Aorta (tissue), 5 donors: ENCODE measurements at regions of chr18 and their contacts with region 1.

Region 1: DNA sequence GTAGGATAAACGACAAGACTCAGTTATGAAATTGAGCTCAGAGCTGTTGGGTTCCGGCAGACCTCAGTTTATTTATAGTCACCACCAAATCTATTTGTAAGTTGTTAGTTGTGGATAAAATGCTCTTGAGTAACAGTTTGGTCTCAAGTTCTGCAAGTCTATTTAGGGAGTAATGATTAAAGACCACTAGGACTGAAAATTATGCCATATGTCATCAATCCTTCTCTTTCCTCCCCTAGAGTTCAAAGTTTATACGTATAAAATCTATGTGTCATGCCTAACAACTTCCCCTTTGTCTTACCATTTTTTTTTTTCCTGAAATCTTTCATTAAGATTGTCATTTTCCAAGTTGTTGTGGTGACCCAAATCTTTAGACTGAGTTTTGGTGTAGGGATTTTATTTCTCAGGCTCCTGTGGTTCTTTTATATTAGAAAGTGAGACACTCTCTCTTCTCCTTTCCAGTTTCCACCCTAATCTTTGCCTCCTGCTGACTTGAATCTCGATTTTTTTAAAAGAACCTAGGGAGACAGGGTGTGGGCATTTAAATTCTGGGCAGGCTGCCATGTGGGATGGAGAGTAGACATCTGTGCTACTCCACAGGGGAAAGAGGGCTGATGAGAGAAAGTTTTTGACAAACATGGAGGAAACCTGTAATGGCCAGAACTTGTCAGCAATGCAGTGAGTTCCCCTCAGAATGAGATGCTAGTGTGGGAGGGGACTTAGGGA is 51.0 kb downstream of the LAMA3 start:
- DNase-seq: no peak
- ATAC-seq: no peak
- H3K4me3 ChIP-seq: no peak overlapping the region
- H3K27ac ChIP-seq: no peak overlapping the region
- H3K4me1 ChIP-seq: no peaks in the 10 kb centered on the region
- H3K27me3 ChIP-seq: no peaks in the 10 kb centered on the region

Region 2: DNA sequence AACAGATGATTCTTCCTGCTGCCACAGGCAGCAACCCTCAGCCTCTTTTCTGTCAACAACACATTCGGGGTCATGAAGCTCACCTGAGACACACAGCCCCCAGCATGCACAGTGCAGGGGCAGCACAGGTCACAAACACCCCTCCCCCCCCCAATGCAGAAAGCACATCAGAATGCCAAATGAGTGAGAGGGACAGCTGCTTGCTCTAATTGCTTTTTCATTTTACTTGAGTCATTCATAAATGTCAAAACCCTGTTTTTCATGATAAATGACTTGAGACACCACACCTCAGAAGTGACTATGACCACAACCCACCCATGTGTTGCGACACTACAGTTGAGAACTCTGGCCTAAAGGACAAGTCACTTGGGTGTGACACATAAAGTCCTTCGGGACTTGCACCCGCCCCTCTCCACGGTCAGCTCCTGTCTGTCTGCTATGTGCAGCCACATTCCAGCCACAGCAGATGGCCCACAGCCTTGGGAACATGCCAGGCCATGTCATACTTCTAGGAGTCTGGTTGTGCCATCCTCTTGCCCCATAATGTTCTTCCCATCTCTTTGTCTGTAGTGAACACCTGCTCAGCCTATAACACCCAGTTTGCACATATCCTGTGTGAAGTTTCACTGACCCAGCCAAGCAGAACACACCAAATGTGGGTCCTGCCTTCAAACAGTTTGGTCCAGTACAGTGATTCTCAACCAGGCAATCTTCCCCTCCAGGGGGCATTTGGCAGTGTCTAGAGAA is 317.4 kb before region 1 on chr18:
- intact Hi-C with region 1: no loop called
- DNase-seq: no peak
- ATAC-seq: no peak
- H3K4me3 ChIP-seq: no peak overlapping the region
- H3K27ac ChIP-seq: no peak overlapping the region
- H3K4me1 ChIP-seq: no peaks in the 10 kb centered on the region
- H3K27me3 ChIP-seq: no peaks in the 10 kb centered on the region

Region 3: GRCh38 chr18:23689616-23690504 is 50.4 kb before region 1 on chr18:
- intact Hi-C with region 1: loop called in 1 of 2 experiments (anchors 5 kb)
- DNase-seq: peak; percentile 48 to 79
- ATAC-seq: peak; percentile 44
- H3K4me3 ChIP-seq: peak overlapping the region; percentile 27 to 70
- H3K27ac ChIP-seq: no peak overlapping the region
- H3K4me1 ChIP-seq: no peaks in the 10 kb centered on the region
- H3K27me3 ChIP-seq: no peaks in the 10 kb centered on the region

Region 4: DNA sequence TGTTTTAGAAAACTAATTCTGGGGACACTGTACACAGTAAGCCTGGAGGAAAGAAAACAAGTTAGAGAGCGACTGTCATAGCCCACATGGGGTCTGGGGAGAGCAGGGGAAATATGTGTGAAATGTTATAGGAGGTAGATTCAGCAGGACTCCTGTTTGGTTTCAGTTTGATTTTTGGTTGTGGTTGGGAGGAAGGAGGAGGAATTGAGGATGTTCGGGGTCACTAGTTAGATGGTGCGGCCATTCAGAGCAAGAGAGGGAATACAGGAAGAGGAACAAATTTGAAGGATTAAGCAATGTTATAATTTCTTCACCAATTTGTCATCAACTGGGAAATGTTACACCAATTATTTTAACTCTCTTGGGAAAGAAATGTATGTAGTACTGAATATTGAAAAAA is 299.4 kb after region 1 on chr18:
- intact Hi-C with region 1: no loop called
- DNase-seq: no peak
- ATAC-seq: no peak
- H3K4me3 ChIP-seq: no peak overlapping the region
- H3K27ac ChIP-seq: no peak overlapping the region
- H3K4me1 ChIP-seq: no peaks in the 10 kb centered on the region
- H3K27me3 ChIP-seq: no peaks in the 10 kb centered on the region

Region 5: GRCh38 chr18:24446953-24447538 is 706.8 kb after region 1 on chr18:
- intact Hi-C with region 1: no loop called
- DNase-seq: no peak
- ATAC-seq: no peak
- H3K4me3 ChIP-seq: no peak overlapping the region
- H3K27ac ChIP-seq: no peak overlapping the region
- H3K4me1 ChIP-seq: no peaks in the 10 kb centered on the region
- H3K27me3 ChIP-seq: no peaks in the 10 kb centered on the region